ENCODE measurements at regions of chr16 and their contacts with region 1.

Region 1: GRCh38 chr16:89395141-89395874 is 95.1 kb downstream of the ANKRD11 start:
- DNase-seq: peak; percentile 99
- H3K4me3 ChIP-seq: peak overlapping the region in 1 of 4 donors; percentile 16
- H3K27ac ChIP-seq: peak overlapping the region; percentile 82 to 90 (median 84)
- H3K4me1 ChIP-seq: peaks cover 0 to 54% (median 46%) of the 10 kb centered on the region in 4 donors
- H3K27me3 ChIP-seq: no peaks in the 10 kb centered on the region
- CTCF ChIP-seq: no peak
- EP300 ChIP-seq: peak; percentile 57 to 97 (median 88)
- POLR2A ChIP-seq: no peak

Region 2: DNA sequence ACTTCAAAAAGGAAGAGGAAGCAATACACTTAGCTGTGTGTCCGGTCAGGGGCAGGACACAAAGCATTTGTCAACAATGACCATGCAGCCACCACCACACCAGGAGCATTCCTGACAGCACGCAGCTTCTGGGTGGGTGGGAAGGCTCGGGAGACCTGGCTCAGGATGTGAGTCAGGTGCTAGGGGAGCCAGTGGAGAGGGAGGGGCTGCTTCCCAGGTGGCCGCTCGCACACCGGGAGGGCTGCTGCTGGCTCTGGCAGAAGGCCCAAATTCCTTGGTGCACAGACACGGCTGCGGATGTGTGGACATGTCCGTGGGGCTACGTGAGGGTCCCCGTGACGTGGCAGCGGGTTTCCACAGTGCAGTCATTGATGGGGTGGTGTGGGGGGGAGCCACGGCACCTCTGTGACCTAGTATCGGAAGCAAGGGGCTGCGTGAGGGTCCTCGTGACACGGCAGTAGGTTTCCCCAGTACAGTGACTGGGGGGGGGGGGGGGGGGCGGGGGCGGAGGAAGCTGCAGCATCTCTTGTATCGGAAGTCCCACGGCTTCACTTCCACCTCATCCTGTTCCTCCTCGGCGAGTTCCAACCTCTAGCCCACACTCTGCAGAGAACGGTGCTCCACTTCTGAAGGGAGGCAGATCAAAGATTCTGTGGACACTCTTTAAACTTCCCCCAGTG is 65.0 kb before region 1 on chr16:
- intact Hi-C with region 1: no loop called
- DNase-seq: no peak
- H3K4me3 ChIP-seq: no peak overlapping the region
- H3K27ac ChIP-seq: peak overlapping the region in 3 of 4 donors; percentile 23 to 51 (median 46)
- H3K4me1 ChIP-seq: peaks cover 0 to 67% (median 62%) of the 10 kb centered on the region in 4 donors
- H3K27me3 ChIP-seq: no peaks in the 10 kb centered on the region
- CTCF ChIP-seq: no peak
- EP300 ChIP-seq: no peak
- POLR2A ChIP-seq: no peak

Region 3: GRCh38 chr16:89357055-89357816 is 38.1 kb before region 1 on chr16:
- intact Hi-C with region 1: loop called (anchors 5 kb)
- DNase-seq: no peak
- H3K4me3 ChIP-seq: no peak overlapping the region
- H3K27ac ChIP-seq: peak overlapping the region in 2 of 4 donors; percentile 18 to 19
- H3K4me1 ChIP-seq: peaks cover 0 to 84% (median 78%) of the 10 kb centered on the region in 4 donors
- H3K27me3 ChIP-seq: no peaks in the 10 kb centered on the region
- CTCF ChIP-seq: no peak
- EP300 ChIP-seq: no peak
- POLR2A ChIP-seq: no peak

Region 4: DNA sequence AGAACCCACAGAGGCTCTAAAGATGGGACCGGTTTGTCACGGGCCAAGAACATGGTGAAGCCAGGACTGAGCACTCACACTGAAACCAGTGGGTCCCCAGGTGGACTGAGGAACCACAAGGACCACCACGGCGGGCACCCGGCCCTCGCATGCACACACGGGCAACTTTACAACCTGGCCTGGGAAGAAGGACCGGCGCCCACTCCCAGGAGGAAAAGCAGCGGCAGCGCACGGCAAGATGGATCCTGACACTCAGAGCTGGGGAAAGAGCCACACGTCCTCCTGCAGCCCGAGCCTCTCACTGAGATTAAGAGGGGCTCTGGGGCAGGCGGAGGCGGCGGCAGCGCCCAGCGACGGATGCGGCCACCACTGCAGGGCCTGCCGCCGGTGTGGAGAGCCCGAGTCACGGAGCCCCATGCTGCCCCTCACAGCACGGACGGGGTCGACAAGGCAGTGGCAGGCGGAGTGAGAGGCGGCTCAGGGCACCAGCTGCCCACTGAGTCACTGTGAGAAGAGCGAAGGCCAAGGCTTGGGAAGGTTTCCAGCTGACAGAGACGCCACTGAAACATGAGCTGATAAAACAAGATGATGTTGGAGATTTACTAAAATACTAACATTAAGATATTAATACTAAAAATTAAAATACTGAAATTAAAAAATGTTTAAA is 23.2 kb before region 1 on chr16:
- intact Hi-C with region 1: loop called (anchors 2 kb)
- DNase-seq: no peak
- H3K4me3 ChIP-seq: no peak overlapping the region
- H3K27ac ChIP-seq: peak overlapping the region in 2 of 4 donors; percentile 19 to 61
- H3K4me1 ChIP-seq: peaks cover 0 to 72% (median 56%) of the 10 kb centered on the region in 4 donors
- H3K27me3 ChIP-seq: no peaks in the 10 kb centered on the region
- CTCF ChIP-seq: no peak
- EP300 ChIP-seq: no peak
- POLR2A ChIP-seq: no peak

Region 5: DNA sequence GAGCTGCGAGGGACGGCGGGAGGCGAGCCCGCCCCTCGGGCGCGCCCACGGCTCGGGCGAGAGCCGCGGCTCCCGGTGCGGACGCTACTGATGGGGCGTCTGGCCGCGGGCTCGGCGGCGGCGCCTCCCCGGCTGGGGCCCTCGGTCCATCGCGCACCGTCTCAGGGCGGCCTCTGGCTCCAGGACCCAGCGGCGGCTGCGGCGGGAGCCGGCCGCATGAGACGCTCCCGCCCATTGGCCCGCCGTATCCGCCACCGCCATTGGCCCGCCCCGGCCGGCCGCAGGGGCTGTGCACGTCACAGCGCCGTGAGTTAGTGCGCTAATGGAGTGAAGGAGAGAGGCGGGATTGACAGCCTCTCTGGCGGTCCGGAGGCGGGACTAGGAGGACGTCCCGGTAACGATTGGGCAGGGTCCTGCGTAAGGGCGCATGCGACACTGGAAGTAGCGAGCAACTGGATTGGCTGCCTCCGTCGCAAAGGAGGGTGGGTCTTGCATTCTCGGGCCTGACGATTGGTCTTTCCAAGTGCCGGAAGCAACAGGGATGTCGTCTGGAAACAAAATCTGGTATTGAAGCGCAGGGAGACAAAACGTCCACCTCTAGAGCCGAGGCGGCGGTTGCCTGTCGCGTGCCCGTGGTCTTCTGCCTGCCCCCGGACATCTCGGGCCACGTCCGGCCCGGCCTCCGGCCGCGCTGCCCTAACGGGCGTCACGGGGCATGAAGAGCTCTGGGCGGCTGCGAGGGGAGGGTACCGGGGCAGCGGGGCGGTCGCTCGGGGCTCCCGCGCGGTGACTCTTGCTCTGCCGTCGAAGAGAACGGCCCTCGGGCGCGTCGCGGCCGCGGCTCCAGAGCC is 95.3 kb after region 1 on chr16 and contains the start of gene ANKRD11:
- intact Hi-C with region 1: loop called (anchors 1 kb)
- DNase-seq: peak; percentile 100
- H3K4me3 ChIP-seq: peak within 1 kb of the TSS; percentile 69 to 98 (median 95)
- H3K27ac ChIP-seq: peak within 1 kb of the TSS; percentile 95 to 100 (median 98)
- H3K4me1 ChIP-seq: peaks cover 0 to 48% (median 42%) of the 10 kb centered on the region in 4 donors
- H3K27me3 ChIP-seq: no peaks in the 10 kb centered on the region
- CTCF ChIP-seq: no peak
- EP300 ChIP-seq: no peak
- POLR2A ChIP-seq: peak; percentile 37 to 44
- total RNA-seq, gene ANKRD11: 42.6 to 161 (median 48.8) TPM